ENCODE measurements at regions of chr5 and their contacts with region 1.

Region 1: DNA sequence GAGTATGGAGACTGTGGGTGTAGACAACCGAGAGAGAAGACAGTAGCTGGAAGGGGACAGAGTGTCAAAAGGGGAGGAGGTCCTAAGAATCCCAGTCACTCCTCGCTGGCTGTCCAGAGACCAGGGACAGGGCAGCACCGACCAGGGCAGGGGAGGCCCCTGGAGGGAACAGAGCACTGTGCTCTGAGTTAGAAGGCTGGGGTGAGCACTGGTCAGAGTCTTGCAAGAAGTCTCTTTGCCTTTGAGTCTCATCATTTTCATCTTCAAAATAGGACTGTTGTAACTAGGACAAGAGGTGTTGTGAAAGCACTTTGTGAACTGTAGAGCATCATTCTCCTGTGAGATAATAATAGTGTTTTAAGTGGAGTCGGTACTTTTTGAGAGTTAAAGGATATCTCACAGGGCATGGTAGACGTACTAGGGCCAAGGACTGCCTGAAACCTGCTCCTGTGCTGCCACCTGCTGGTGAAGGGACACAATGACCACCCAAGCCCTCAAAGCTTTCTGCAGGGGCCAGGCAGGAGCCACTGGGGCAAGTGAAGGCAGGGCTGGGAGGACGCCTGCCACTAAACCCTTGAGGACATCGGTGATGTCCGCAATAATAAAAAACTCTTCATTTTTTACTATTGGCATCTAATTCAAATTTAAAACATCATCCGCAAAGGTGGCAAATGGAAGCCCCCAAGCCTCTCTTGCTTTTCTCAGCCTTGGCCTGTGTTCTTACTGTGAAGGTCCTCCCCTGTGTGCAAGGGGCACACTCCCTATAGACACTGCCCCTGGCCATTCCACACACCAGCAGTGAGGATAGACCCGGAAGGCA is 28.2 kb downstream of the SLC6A7 start:
- DNase-seq: peak; percentile 87

Region 2: DNA sequence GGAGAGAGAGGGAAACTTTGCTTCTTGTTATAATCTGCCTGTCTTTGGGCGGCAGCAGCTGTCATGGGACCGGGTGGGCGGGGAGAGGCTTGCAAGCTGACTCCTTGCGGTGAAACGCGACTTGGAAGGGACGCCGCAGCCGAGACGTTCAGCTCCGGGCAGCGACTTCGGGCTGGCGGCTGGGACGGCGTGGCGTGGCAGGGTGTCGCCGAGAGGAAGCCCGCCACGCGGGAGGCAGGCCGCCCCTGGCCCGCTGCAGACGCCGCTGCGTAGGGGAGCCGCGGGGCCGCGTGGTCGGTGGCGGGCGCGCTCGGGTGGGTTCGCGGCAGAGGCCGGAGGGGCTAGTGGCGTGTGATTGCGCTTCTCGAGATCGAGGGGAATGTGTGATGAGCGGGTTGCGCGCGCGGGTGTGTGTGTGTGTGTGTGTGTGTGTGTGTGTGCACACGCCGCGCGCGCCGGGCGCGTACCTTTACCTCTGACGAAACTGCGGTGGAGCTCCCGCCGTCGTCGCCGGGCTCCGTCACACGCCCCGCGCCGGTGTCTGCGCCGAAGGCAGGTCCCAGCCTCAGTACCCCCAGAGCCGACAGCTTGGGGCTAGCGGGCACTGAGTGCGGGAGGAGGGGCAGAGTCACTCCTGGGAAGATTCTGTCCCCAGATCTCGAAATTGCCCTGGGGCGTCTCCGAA is 486.3 kb before region 1 on chr5:
- intact Hi-C with region 1: no loop called
- DNase-seq: peak; percentile 76

Region 3: GRCh38 chr5:150024346-150024984 is 193.6 kb before region 1 on chr5:
- intact Hi-C with region 1: loop called (anchors 2 kb)
- DNase-seq: no peak

Region 4: DNA sequence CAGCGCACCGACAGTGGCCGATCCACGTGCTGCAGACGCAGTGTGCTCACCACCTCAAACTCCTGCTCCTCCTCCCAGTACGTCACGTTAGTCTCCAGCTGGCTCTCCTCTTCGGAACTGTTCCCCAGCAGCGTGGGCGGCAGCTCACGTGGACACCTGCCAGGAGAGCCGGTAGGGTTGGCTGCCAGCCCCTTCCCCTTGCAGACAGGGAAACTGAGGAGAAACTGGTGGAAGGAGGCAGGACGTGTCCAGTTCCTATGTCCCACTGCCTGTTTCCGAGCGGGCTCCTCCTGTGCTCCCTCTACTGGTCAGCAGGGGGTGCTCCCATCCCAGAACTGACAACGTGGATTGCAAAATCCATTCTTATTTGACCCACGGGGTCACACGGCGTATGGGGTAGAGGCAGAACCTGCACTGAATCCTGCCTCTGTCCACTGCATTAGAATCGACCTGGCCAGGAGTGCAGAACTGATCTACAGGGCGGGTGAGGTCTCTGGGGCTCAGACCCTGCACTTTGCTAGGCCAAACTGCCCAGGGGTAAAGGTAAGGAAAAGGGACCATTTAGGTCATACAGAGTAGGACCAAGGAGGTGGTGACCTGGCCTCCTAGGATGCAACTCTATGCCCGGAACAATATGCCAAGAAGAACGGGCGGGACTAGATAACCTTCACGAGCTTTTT is 88.1 kb before region 1 on chr5:
- intact Hi-C with region 1: loop called (anchors 1 kb)
- DNase-seq: no peak

Region 5: GRCh38 chr5:150161242-150162141 is 56.6 kb before region 1 on chr5:
- intact Hi-C with region 1: loop called (anchors 1 kb)
- DNase-seq: peak; percentile 92